ENCODE measurements at regions of chr14 and their contacts with region 1.

Region 1: DNA sequence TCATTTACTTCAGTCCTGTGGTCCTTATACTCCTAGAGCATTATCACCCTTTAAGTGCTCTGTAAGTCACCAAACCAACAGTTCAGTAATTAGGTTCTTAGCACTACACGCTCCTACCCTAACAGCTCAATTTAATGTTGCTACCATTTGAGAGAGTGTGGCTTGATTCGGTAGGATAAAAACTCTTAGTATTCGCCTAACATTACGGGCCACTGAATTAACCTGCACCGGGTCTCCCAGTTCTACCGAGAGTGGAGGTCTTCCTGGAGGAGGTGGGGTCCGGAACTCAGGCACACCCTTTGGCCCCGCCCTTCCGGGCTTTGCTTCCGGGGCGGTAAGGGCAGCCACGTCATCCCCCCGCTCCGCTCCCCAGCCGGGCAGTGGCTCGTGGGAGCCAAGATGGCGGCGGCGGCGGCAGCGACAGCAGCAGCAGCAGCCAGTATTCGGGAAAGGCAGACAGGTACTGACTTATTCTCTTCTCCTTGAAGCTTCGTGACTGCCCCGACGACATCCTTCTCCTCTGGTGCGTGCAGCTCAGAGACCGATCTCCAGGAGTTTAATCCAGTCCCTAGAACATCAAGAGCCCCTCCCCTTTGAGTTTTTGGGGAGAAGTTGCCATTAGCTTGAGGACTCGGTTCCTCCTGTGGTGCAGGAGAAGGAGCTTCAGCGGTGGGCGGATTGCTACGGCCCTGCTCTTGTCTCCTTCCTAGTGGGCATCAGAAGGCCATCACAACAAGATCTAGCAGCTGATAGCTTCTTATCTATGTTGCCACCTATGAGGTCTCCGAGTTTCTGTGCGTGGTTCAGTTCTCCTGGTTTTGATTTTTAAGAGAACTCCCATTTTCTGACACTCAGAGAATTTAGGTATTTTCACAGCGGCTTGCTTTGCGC is at the start of gene SCFD1:
- DNase-seq: peak; percentile 86 to 94 (median 91)
- ATAC-seq: peak; percentile 99
- H3K4me3 ChIP-seq: peak within 1 kb of the TSS; percentile 97
- H3K4me3 Mint-ChIP-seq: peak within 1 kb of the TSS; percentile 95 to 100 (median 97)
- H3K27ac ChIP-seq: peak within 1 kb of the TSS; percentile 86
- H3K27ac Mint-ChIP-seq: peak within 1 kb of the TSS; percentile 86 to 98 (median 95)
- H3K4me1 ChIP-seq: peaks cover 14 to 26% of the 10 kb centered on the region in 2 donors
- H3K4me1 Mint-ChIP-seq: peaks cover 14 to 58% (median 44%) of the 10 kb centered on the region in 7 donors
- H3K27me3 ChIP-seq: no peaks in the 10 kb centered on the region
- H3K27me3 Mint-ChIP-seq: no peaks in the 10 kb centered on the region
- total RNA-seq, gene SCFD1: 63.2 to 75.4 (median 68.2) TPM

Region 2: GRCh38 chr14:31127690-31128089 is 505.5 kb after region 1 on chr14:
- CTCF ChIA-PET with region 1: no interaction called
- POLR2A ChIA-PET with region 1: no interaction called
- intact Hi-C with region 1: loop called in 1 of 2 experiments (anchors 10 kb)
- DNase-seq: peak in 5 of 9 donors; percentile 2 to 42 (median 27)
- ATAC-seq: peak; percentile 91
- H3K4me3 ChIP-seq: no peak overlapping the region
- H3K4me3 Mint-ChIP-seq: peak overlapping the region in 3 of 10 donors; percentile 7 to 67 (median 18)
- H3K27ac ChIP-seq: no peak overlapping the region
- H3K27ac Mint-ChIP-seq: peak overlapping the region in 5 of 9 donors; percentile 11 to 75 (median 52)
- H3K4me1 ChIP-seq: peaks cover 9 to 30% of the 10 kb centered on the region in 2 donors
- H3K4me1 Mint-ChIP-seq: peaks cover 16 to 47% (median 39%) of the 10 kb centered on the region in 7 donors
- H3K27me3 ChIP-seq: no peaks in the 10 kb centered on the region
- H3K27me3 Mint-ChIP-seq: peaks cover 0 to 2% (median 0%) of the 10 kb centered on the region in 5 donors

Region 3: GRCh38 chr14:31456841-31457664 is 834.9 kb after region 1 on chr14 and contains the start of gene DTD2:
- CTCF ChIA-PET with region 1: no interaction called
- POLR2A ChIA-PET with region 1: no interaction called
- intact Hi-C with region 1: loop called (anchors 1 kb)
- DNase-seq: peak; percentile 80 to 89 (median 86)
- ATAC-seq: peak; percentile 99
- H3K4me3 ChIP-seq: peak within 1 kb of the TSS; percentile 82
- H3K4me3 Mint-ChIP-seq: peak within 1 kb of the TSS; percentile 92 to 98 (median 96)
- H3K27ac ChIP-seq: peak within 1 kb of the TSS; percentile 77
- H3K27ac Mint-ChIP-seq: peak within 1 kb of the TSS; percentile 89 to 98 (median 95)
- H3K4me1 ChIP-seq: peaks cover 6% of the 10 kb centered on the region in 2 donors
- H3K4me1 Mint-ChIP-seq: peaks cover 14 to 48% (median 40%) of the 10 kb centered on the region in 7 donors
- H3K27me3 ChIP-seq: no peaks in the 10 kb centered on the region
- H3K27me3 Mint-ChIP-seq: peaks cover 0 to 5% (median 0%) of the 10 kb centered on the region in 5 donors
- total RNA-seq, gene DTD2: 13.4 to 20.2 (median 18.6) TPM

Measured in naive thymus-derived CD4-positive, alpha-beta T cell (primary cell).